Astrocyte of the cerebellum (primary cell): ENCODE measurements at regions of chr5 and their contacts with region 1.

Region 1: DNA sequence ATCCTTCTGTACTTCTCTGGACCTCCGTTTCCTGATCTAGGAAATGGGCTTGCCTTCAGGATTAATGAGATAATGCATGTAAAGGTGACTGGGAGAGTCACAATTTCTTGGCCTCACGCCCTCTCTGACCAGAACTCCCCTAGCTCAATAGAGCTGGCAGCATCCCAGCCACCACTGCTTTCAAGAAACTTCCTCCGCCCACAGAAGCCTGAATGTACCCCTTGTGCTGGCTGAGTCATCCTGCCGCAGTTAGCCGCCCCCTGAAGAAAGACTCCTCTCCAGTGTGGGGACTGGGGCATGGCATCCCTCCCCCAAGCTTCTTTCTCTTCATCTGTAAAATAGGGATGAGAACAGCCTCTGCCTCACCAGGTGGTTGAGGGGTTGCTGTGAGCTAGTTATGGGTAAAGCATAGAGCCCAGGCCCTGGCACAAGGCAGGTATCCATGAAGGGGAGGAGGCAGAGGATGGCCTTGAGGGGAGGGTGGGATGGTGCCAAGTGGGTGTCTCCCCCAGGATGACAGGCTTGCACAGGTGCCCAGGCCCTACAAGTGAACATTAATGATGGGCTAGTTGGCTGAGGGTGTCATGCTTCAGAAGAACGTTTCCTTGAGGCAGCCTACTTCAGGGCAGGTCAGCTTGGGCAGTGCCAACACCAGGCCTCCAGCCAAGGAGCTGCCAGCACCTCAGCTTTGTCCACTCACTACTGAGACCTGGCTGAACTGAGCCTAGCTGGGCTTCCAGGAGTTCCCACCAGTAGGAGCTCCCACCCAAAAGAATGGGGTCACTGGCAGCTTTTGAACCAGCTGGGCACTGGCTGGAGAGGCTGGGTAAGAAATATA is 3.4 kb downstream of the PDLIM4 start:
- DNase-seq: peak; percentile 95
- H3K4me3 ChIP-seq: peak overlapping the region; percentile 80
- CTCF ChIP-seq: no peak

Region 2: DNA sequence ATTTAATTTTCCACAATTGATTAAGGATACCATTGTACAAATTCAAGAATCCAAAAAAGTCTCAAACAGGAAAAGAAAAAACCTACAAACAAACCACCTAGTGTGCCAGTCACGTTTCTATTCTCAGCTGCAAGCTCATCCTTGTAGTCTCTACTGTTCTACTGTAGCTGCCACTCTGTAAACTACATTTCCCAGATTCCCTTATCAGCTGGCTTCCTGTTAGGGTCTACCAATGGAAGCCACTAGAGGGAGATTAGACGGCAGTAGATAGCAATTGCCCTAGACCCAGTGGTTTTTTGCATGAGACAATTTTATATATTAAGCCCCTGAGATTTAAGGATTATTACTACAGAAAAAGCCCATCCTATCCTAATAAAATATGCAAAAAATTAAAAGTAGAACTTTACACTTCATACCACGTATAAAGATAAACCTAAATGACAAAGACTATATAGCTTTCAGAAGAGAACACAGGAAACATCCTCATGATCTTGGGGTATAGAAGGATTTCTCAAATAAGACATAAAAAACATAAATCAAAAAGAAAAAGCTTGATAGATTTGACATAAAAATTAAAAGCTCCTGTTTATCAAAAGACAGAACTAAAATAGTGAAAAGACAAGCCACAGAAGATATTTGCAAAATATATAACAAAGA is 70.6 kb before region 1 on chr5:
- in situ Hi-C with region 1: loop called (anchors 5 kb)
- DNase-seq: peak; percentile 51
- H3K4me3 ChIP-seq: no peak overlapping the region
- CTCF ChIP-seq: peak; percentile 92

Region 3: DNA sequence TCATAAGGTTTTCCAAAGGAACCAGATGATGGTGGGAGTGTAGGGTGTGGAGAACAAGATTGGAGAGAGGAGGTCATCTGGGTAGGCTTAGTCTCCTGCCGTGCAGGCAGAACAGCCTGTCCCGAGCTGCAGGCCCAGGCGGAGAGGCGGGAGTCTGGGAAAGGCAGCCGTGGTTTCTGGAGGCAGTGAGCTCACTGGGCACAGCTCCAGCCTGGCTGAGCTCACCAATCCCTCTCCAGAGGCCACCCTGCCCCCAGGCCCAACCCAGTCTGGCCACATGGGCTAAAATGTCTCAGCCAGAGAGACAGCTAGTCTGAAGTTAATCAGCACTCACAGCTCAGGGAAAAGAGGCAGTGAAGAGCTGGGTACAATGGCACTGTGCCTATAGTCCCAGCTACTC is 45.6 kb before region 1 on chr5:
- in situ Hi-C with region 1: no loop called
- DNase-seq: peak; percentile 96
- H3K4me3 ChIP-seq: no peak overlapping the region
- CTCF ChIP-seq: no peak